PC-9 (cell line): ENCODE measurements at regions of chr15 and their contacts with region 1.

Region 1: DNA sequence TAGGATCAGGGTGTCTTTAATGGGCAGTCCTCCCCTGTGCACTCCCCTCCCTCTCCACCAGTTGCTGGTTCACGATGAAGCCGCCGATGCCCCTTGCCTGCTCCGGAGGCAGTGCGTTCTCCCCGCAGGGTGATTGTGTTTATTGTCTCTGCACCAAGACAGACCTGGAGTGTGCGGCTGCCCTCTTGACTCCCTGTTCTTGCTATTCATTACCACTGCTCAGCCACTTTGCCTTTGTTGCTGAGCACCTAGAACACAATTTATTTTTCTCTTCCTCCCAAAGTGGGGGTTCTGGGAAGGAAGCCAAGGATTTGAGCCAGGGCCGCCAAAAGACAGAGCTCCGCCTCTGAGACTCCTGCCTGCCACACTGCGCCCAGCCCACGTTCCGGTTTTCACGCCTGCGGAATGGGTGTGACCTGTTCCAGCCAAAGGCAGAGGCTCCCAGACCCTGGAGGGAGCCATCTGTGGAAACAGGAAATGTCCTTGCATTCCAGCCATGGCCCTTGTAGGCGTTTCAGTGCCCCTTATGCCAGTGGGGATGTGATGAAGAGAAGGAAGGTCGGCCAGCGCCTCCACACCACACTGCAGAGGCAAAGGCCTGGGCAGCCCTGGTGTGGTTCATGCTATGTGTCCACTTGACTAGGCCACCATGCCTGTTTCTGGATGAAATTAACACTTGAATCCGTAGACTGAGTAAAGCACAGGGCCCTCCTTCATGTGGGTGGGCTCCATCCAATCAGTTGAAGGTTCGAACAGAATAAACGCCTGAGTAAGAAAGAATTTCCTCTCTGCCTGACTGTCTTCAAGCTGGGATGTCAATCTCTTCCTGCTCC is 85.8 kb downstream of the HMG20A start:
- DNase-seq: peak in 1 of 2 experiments; percentile 72
- H3K4me3 ChIP-seq: no peak overlapping the region
- H3K27ac ChIP-seq: peak overlapping the region; percentile 49; the same call in 1 of the 2 replicates
- H3K4me1 ChIP-seq: peaks cover 52% of the 10 kb centered on the region
- H3K27me3 ChIP-seq: no peaks in the 10 kb centered on the region
- CTCF ChIP-seq: no peak

Region 2: GRCh38 chr15:76730262-76730661 is 776.3 kb before region 1 on chr15:
- CTCF ChIA-PET with region 1: no interaction called
- POLR2A ChIA-PET with region 1: no interaction called
- intact Hi-C with region 1: no loop called
- DNase-seq: no peak
- H3K4me3 ChIP-seq: no peak overlapping the region
- H3K27ac ChIP-seq: no peak overlapping the region
- H3K4me1 ChIP-seq: no peaks in the 10 kb centered on the region
- H3K27me3 ChIP-seq: no peaks in the 10 kb centered on the region
- CTCF ChIP-seq: no peak

Region 3: DNA sequence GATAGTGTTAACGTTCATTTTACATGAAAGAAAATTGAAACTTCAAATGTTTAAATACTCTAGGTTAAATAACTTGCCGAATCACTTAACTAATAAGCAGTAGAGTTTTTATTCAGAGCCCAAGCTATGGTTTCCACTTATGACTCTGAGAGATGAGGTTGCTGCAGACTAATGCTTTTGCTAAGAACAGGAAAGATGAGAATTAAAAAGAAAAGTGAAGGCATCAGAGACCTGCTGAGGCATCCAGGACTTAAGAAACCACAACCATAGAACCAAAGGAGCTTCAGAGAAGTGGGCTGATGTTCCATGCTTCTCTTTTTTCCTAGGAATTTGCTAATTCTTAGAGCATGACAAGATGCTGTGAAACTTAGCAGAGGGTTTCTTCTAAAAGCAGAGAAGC is 76.3 kb before region 1 on chr15:
- CTCF ChIA-PET with region 1: no interaction called
- POLR2A ChIA-PET with region 1: interaction called, 10 read pairs
- intact Hi-C with region 1: no loop called
- DNase-seq: no peak
- H3K4me3 ChIP-seq: no peak overlapping the region
- H3K27ac ChIP-seq: no peak overlapping the region
- H3K4me1 ChIP-seq: no peaks in the 10 kb centered on the region
- H3K27me3 ChIP-seq: no peaks in the 10 kb centered on the region
- CTCF ChIP-seq: no peak

Region 4: DNA sequence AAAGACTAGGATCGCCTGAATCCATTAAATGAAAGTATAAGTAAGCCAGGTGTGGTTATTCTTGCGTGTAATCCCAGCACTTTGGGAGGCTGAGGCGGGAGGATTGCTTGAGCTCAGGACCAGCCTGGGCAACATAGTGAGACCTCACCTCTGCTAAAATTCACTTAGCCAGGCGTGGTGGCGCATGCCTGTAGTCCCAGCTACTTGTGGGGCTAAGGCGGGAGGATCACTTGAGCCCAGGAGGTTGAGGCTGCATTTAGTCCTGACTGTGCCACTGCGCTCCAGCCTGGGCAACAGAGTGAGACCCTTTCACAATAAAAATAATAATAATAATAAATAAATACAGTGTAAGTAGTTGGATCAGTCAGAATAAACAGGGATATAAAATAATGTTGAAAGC is 975.4 kb after region 1 on chr15:
- CTCF ChIA-PET with region 1: no interaction called
- POLR2A ChIA-PET with region 1: no interaction called
- intact Hi-C with region 1: no loop called
- DNase-seq: no peak
- H3K4me3 ChIP-seq: no peak overlapping the region
- H3K27ac ChIP-seq: no peak overlapping the region
- H3K4me1 ChIP-seq: no peaks in the 10 kb centered on the region
- H3K27me3 ChIP-seq: no peaks in the 10 kb centered on the region
- CTCF ChIP-seq: no peak